ENCODE measurements at regions of chr5 and their contacts with region 1.

Region 1: GRCh38 chr5:146533260-146533857 is 17.4 kb upstream of the GPR151 start:
- DNase-seq: peak; percentile 44
- ATAC-seq: peak; percentile 95
- H3K4me3 ChIP-seq: no peak overlapping the region
- H3K27ac ChIP-seq: no peak overlapping the region
- H3K4me1 ChIP-seq: no peaks in the 10 kb centered on the region; the same call in 1 of the 2 replicates
- H3K27me3 ChIP-seq: no peaks in the 10 kb centered on the region
- CTCF ChIP-seq: peak; percentile 87 to 92 (median 90)
- EP300 ChIP-seq: no peak
- POLR2A ChIP-seq: no peak
- RAD21 ChIP-seq: peak; percentile 67

Region 2: DNA sequence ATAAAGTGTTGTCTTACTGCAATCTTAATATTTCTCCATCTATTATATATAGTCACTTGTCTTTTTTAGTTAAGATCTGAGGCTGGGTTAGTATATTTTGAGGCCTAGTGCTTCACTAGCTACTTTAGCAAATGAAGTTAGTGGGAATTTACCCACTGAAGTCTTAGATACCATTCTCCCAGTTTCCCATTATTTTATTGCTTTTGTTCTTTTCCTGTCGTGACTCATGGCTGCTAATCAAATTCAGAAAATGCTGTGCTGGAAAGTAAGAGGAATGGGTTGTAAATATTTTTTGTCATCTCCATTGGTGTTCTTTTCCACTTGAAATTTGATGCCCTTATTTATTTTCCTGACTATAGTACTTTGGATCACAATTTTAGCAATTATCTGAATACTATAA is 72.0 kb before region 1 on chr5:
- CTCF ChIA-PET with region 1: no interaction called
- POLR2A ChIA-PET with region 1: no interaction called
- RAD21 ChIA-PET with region 1: no interaction called
- SMC1A ChIA-PET with region 1: no interaction called
- in situ Hi-C with region 1: no loop called
- intact Hi-C with region 1: no loop called
- DNase-seq: no peak
- ATAC-seq: no peak
- H3K4me3 ChIP-seq: no peak overlapping the region
- H3K27ac ChIP-seq: no peak overlapping the region
- H3K4me1 ChIP-seq: no peaks in the 10 kb centered on the region
- H3K27me3 ChIP-seq: no peaks in the 10 kb centered on the region
- CTCF ChIP-seq: no peak
- EP300 ChIP-seq: no peak
- POLR2A ChIP-seq: no peak
- RAD21 ChIP-seq: no peak

Region 3: GRCh38 chr5:146490089-146490843 is 43.1 kb before region 1 on chr5:
- CTCF ChIA-PET with region 1: interaction called, 10 read pairs
- POLR2A ChIA-PET with region 1: no interaction called
- RAD21 ChIA-PET with region 1: no interaction called
- SMC1A ChIA-PET with region 1: no interaction called
- in situ Hi-C with region 1: no loop called
- intact Hi-C with region 1: no loop called
- DNase-seq: no peak
- ATAC-seq: no peak
- H3K4me3 ChIP-seq: no peak overlapping the region
- H3K27ac ChIP-seq: no peak overlapping the region
- H3K4me1 ChIP-seq: no peaks in the 10 kb centered on the region
- H3K27me3 ChIP-seq: no peaks in the 10 kb centered on the region
- CTCF ChIP-seq: no peak
- EP300 ChIP-seq: no peak
- POLR2A ChIP-seq: no peak
- RAD21 ChIP-seq: no peak

Region 4: GRCh38 chr5:146520731-146521130 is 12.6 kb before region 1 on chr5:
- CTCF ChIA-PET with region 1: interaction called, 48 read pairs
- POLR2A ChIA-PET with region 1: no interaction called
- RAD21 ChIA-PET with region 1: interaction called, 4 read pairs
- SMC1A ChIA-PET with region 1: interaction called, 3 read pairs
- in situ Hi-C with region 1: no loop called
- intact Hi-C with region 1: no loop called
- DNase-seq: no peak
- ATAC-seq: no peak
- H3K4me3 ChIP-seq: no peak overlapping the region
- H3K27ac ChIP-seq: no peak overlapping the region
- H3K4me1 ChIP-seq: no peaks in the 10 kb centered on the region
- H3K27me3 ChIP-seq: no peaks in the 10 kb centered on the region
- CTCF ChIP-seq: no peak
- EP300 ChIP-seq: no peak
- POLR2A ChIP-seq: no peak
- RAD21 ChIP-seq: no peak

Region 5: DNA sequence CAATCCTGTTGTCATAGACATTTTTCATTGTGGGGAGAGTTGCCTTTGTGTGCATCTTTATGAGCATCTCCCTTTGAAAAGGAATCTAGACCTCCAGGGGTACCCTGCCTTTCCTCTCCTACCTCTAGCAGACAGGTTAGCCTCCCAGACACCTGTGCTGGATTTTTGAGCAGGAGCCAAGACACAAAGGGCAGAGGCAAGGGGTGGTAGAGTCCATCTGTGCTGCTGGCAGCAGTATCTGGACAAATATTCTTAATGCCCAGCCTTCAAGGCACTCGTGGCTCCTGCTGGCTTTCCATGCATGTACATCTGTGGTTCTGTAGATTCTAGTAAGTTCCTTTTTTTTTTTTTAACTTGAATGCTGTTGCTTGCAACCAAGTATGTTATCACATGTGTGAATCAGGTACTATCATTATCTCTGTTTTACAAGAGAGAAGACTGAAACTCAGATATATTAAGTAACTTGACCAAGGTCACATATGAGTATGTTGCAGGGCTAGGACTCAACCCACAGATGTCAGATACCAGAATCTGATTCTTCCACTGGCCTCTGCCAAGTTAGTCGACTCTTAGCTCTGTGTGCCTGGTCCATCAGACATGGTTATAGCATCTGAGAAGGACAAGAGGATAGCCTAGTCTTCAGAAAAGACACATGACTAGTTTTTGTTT is 15.6 kb after region 1 on chr5:
- CTCF ChIA-PET with region 1: interaction called, 79 read pairs
- POLR2A ChIA-PET with region 1: no interaction called
- RAD21 ChIA-PET with region 1: interaction called, 3 read pairs
- SMC1A ChIA-PET with region 1: interaction called, 3 read pairs
- in situ Hi-C with region 1: no loop called
- intact Hi-C with region 1: no loop called
- DNase-seq: no peak
- ATAC-seq: peak; percentile 31
- H3K4me3 ChIP-seq: no peak overlapping the region
- H3K27ac ChIP-seq: no peak overlapping the region
- H3K4me1 ChIP-seq: no peaks in the 10 kb centered on the region
- H3K27me3 ChIP-seq: no peaks in the 10 kb centered on the region; a peak in 1 of 4 replicates
- CTCF ChIP-seq: no peak
- EP300 ChIP-seq: no peak
- POLR2A ChIP-seq: no peak
- RAD21 ChIP-seq: no peak

Measured in GM12878 (cell line).